Activated CD4-positive, alpha-beta memory T cell treated with anti-CD3 and anti-CD28 coated beads for 36 hours (primary cell): ENCODE measurements at regions of chr1 and their contacts with region 1.

Region 1: GRCh38 chr1:97820470-97821188 is 100.2 kb downstream of the DPYD start:
- DNase-seq: no peak
- H3K4me3 Mint-ChIP-seq: no peak overlapping the region
- H3K27ac Mint-ChIP-seq: no peak overlapping the region
- H3K4me1 Mint-ChIP-seq: no peaks in the 10 kb centered on the region
- H3K27me3 Mint-ChIP-seq: no peaks in the 10 kb centered on the region

Region 2: DNA sequence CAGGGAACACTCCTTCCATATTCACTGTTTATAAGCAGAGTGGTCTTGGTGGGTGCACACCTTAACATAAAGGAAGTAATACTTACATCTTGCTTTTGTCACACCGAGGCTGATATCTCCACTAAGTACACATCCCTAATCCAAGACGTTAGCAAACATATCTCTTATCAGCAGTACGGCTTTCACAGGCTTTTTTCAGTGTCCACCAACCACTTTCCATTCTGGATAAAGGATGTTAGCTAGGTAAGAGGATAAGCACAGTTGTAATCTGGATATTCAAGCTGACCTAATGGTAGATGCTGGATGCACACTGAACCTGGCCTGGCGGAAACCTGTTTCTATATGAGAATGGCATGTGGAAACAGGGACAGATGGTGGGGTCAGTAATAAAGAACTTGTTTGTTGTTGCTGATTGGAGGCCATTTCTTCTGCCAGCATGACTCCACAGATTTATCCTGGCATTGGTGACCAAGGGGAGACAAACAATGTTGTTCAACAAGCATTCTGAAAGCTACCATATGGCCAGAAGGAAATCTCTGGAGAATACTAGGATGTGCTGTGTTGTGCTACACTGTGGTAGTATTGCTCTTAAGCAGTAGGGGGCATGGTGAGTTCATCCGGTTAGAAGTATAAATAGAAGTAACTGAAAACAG is 682.6 kb before region 1 on chr1:
- CTCF ChIA-PET with region 1: interaction called, 4 read pairs
- POLR2A ChIA-PET with region 1: no interaction called
- intact Hi-C with region 1: loop called (anchors 1 kb)
- DNase-seq: no peak
- H3K4me3 Mint-ChIP-seq: no peak overlapping the region
- H3K27ac Mint-ChIP-seq: no peak overlapping the region
- H3K4me1 Mint-ChIP-seq: no peaks in the 10 kb centered on the region
- H3K27me3 Mint-ChIP-seq: no peaks in the 10 kb centered on the region

Region 3: DNA sequence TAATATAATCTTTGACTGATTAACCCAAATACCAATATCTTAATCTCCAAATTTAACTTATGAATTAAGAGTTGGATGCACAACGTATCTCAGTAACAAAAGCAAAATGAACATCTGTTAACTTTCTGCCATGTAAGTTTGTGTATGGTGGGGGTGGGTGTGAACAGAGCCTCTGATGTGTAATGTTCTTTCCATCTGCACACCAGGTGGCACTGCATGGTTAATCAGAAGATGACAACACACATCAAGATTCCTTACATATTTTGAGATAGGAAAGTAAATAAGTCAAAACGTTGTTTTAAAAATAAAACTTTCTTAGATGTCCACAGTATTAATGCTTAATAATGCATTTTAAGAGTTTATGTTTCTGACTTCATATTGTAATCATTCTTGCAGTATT is 151.7 kb before region 1 on chr1:
- CTCF ChIA-PET with region 1: no interaction called
- POLR2A ChIA-PET with region 1: no interaction called
- intact Hi-C with region 1: loop called (anchors 1 kb)
- DNase-seq: no peak
- H3K4me3 Mint-ChIP-seq: no peak overlapping the region
- H3K27ac Mint-ChIP-seq: no peak overlapping the region
- H3K4me1 Mint-ChIP-seq: no peaks in the 10 kb centered on the region
- H3K27me3 Mint-ChIP-seq: no peaks in the 10 kb centered on the region